ENCODE measurements at regions of chr7 and their contacts with region 1.

Region 1: GRCh38 chr7:33982425-33982786 is 77.1 kb downstream of the BMPER start:
- DNase-seq: peak in 1 of 2 experiments; percentile 67
- ATAC-seq: no peak
- H3K4me3 ChIP-seq: no peak overlapping the region
- H3K27ac ChIP-seq: peak overlapping the region; percentile 92 to 94
- H3K4me1 ChIP-seq: peaks cover 69% of the 10 kb centered on the region
- CTCF ChIP-seq: peak; percentile 50
- EP300 ChIP-seq: no peak
- POLR2A ChIP-seq: no peak
- RAD21 ChIP-seq: peak; percentile 66 to 75

Region 2: GRCh38 chr7:33868159-33868558 is 114.2 kb before region 1 on chr7:
- CTCF ChIA-PET with region 1: no interaction called
- POLR2A ChIA-PET with region 1: no interaction called
- DNase-seq: no peak
- ATAC-seq: peak in 1 of 2 experiments; percentile 34; a peak in 1 of 6 replicates
- H3K4me3 ChIP-seq: no peak overlapping the region
- H3K27ac ChIP-seq: no peak overlapping the region
- H3K4me1 ChIP-seq: peaks cover 3% of the 10 kb centered on the region
- CTCF ChIP-seq: no peak
- EP300 ChIP-seq: no peak
- POLR2A ChIP-seq: no peak
- RAD21 ChIP-seq: no peak

Region 3: GRCh38 chr7:33895025-33895804 is 87.2 kb before region 1 on chr7:
- CTCF ChIA-PET with region 1: no interaction called
- POLR2A ChIA-PET with region 1: no interaction called
- DNase-seq: peak; percentile 72 to 80
- ATAC-seq: peak; percentile 99 to 100
- H3K4me3 ChIP-seq: no peak overlapping the region
- H3K27ac ChIP-seq: no peak overlapping the region
- H3K4me1 ChIP-seq: peaks cover 4% of the 10 kb centered on the region; the same call in 2 of the 3 replicates
- CTCF ChIP-seq: peak; percentile 80
- EP300 ChIP-seq: no peak
- POLR2A ChIP-seq: no peak
- RAD21 ChIP-seq: peak; percentile 74 to 83

Region 4: DNA sequence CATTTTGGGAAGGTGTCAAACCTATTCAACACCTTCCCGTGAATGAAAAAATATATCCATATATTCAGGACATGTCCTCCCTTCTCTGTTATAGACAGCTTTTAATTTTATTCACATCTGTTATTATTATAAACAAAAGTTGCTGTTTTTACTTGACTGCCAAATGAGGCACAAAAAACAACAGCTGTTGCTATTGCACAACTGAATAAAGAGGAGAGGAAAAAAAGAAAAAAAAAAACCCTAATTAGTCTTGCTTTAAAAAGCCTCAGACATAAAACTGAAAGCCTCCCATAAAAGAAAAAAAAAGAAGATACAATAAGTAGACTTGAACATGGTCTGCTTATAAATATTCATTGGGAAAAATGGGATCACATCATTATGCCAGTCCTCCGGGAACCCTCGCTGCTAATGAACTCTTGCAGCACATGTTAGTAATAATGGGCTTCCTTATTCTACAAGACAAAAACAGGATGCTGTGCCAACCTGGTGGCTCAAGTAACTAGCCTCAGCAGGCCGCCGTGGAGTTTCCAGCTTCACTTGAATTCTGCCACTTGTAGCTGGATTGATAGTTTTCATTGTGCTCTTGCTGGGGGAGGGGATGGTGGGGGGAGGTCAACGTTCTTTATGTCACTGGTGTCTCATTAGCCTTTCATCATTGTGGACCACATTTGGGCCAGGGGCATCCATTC is 76.5 kb after region 1 on chr7:
- CTCF ChIA-PET with region 1: interaction called, 11 read pairs
- POLR2A ChIA-PET with region 1: interaction called, 6 read pairs
- DNase-seq: no peak
- ATAC-seq: no peak
- H3K4me3 ChIP-seq: no peak overlapping the region
- H3K27ac ChIP-seq: peak overlapping the region; percentile 92 to 97
- H3K4me1 ChIP-seq: peaks cover 72% of the 10 kb centered on the region
- CTCF ChIP-seq: no peak
- EP300 ChIP-seq: no peak
- POLR2A ChIP-seq: no peak
- RAD21 ChIP-seq: no peak

Region 5: GRCh38 chr7:34087892-34088891 is 105.8 kb after region 1 on chr7:
- CTCF ChIA-PET with region 1: interaction called, 32 read pairs
- POLR2A ChIA-PET with region 1: no interaction called
- DNase-seq: peak in 1 of 2 experiments; percentile 62
- ATAC-seq: peak; percentile 90 to 97; a peak in 5 of 6 replicates
- H3K4me3 ChIP-seq: no peak overlapping the region
- H3K27ac ChIP-seq: peak overlapping the region; percentile 64 to 81
- H3K4me1 ChIP-seq: peaks cover 16% of the 10 kb centered on the region
- CTCF ChIP-seq: peak; percentile 57
- EP300 ChIP-seq: no peak
- POLR2A ChIP-seq: no peak
- RAD21 ChIP-seq: peak; percentile 62 to 66

Region 6: DNA sequence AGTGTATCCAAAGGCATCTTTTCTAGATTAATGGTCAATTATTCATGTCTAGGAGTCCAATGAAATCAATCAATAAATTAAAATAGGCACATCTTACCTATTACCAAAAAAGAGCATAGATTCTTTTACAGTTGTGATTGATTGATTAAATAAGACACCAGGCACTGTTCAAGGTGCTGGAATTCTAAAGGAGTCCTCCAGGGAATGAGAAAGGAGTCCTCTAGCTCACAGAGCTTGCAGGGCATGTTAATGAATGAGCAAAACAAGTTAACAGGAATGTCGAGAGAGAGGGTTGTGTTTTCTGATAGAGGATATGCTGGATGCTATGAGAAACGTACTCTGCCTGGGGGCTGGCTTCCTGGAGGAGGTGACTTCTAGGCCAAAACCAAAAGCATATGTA is 114.4 kb after region 1 on chr7:
- CTCF ChIA-PET with region 1: interaction called, 10 read pairs
- POLR2A ChIA-PET with region 1: no interaction called
- DNase-seq: no peak
- ATAC-seq: no peak
- H3K4me3 ChIP-seq: no peak overlapping the region
- H3K27ac ChIP-seq: peak overlapping the region in 1 of 2 experiments; percentile 69; a peak in 2 of 6 replicates
- H3K4me1 ChIP-seq: peaks cover 9% of the 10 kb centered on the region; the same call in 2 of the 3 replicates
- CTCF ChIP-seq: no peak
- EP300 ChIP-seq: no peak
- POLR2A ChIP-seq: no peak
- RAD21 ChIP-seq: no peak

Measured in A549 (cell line).